AG04450 (cell line): ENCODE measurements at regions of chr17 and their contacts with region 1.

Region 1: DNA sequence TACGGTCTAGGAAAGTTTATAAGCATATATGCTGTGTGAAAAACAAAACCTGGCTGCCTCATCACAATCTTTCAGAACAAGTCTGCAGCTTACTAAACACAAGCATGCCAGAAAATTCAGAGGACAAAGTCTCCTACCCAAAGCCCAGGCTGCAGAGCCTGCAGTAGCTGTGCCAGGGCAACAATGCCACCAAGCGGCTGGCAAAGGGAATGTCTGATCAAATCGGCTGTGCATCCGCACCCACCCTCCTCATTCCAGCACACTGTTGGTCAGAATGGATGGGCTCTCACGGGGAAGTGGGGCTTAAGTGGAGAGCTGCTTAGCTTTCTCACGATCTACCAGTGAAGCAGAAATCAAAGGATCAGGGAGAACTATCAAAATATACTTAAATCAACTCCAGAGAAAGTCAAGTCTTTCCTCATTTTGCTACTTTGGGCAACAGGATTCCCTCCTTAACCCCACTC is 73.5 kb downstream of the CYTH1 start:
- DNase-seq: peak; percentile 72
- H3K4me3 ChIP-seq: no peak overlapping the region
- H3K27ac ChIP-seq: no peak overlapping the region
- H3K27me3 ChIP-seq: no peaks in the 10 kb centered on the region
- CTCF ChIP-seq: peak; percentile 95

Region 2: GRCh38 chr17:78421484-78422266 is 286.9 kb before region 1 on chr17:
- CTCF ChIA-PET with region 1: interaction called, 23 read pairs
- POLR2A ChIA-PET with region 1: no interaction called
- DNase-seq: peak; percentile 32
- H3K4me3 ChIP-seq: no peak overlapping the region
- H3K27ac ChIP-seq: no peak overlapping the region
- H3K27me3 ChIP-seq: no peaks in the 10 kb centered on the region
- CTCF ChIP-seq: peak; percentile 99

Region 3: DNA sequence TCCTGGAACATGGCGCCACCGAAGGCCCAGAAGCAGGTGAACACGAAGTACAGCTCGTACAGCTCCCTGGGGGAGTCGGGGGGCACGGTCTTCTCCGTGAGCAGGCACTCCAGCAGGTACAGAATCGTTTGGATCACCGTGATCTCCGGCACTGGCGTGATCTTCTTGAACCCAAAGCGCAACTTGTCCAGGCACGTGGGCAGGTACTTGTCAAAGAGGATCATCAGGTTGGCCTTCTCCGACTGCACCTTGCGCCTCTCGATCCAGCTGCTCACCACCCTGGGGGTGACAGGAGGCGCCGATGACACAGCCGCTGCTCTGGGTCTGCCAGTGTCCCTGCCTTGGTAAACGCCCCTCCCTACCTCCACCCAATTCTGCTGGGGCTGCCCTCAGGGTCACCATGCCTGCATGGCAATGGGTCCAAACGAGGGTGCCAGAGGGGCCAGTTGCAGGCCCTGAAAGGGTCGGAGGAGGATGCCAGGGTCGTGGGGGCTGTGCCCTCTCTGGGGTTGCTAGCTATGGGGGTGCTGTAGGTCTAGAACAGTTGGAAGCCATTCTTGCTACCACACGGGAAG is 222.2 kb before region 1 on chr17:
- CTCF ChIA-PET with region 1: interaction called, 14 read pairs
- POLR2A ChIA-PET with region 1: no interaction called
- DNase-seq: no peak
- H3K4me3 ChIP-seq: no peak overlapping the region
- H3K27ac ChIP-seq: no peak overlapping the region
- H3K27me3 ChIP-seq: peaks cover 31% of the 10 kb centered on the region
- CTCF ChIP-seq: no peak

Region 4: GRCh38 chr17:78497115-78497540 is 211.4 kb before region 1 on chr17:
- CTCF ChIA-PET with region 1: interaction called, 111 read pairs
- POLR2A ChIA-PET with region 1: interaction called, 5 read pairs
- DNase-seq: peak; percentile 38
- H3K4me3 ChIP-seq: no peak overlapping the region
- H3K27ac ChIP-seq: no peak overlapping the region
- H3K27me3 ChIP-seq: no peaks in the 10 kb centered on the region
- CTCF ChIP-seq: peak; percentile 80

Region 5: DNA sequence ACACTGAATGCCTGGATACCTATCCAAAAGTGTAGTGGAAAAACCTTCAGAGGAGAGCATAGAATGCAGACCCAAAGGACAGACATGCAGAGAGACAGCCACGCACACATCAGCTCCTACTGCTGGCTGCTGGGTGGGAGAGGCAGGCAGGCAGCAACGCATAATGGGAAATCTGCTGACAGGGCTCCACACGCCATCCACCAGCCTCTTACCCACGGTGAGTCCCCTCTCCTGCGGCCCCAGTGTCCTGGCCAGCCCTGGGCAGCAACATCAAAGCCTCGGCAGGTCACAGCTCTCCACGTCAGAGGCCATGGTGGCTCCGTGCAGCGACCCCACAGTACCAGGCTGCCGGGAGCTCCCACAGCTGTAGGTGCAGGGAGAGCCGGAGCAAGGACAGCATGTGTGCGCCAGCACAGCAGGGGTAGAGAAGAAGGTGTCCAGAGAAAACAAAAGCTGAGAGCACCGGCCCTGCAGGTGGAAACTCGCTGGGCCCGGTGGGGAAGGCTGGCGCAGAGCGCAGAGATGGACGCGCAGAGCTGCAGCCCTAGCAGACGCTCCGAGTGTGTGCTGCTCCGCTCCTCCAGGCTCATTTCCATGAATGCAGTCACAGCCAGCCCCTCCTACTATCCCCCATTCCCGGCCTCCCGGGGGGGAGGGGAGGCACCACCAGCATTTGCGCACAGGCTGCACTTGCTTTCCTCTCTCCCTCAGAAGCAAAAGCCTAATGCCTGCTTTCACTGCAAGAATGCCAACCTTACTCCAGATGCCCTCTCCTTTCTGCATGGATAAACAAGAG is 14.7 kb after region 1 on chr17:
- CTCF ChIA-PET with region 1: interaction called, 22 read pairs
- POLR2A ChIA-PET with region 1: interaction called, 3 read pairs
- DNase-seq: no peak
- H3K4me3 ChIP-seq: peak overlapping the region; percentile 37
- H3K27ac ChIP-seq: no peak overlapping the region
- H3K27me3 ChIP-seq: no peaks in the 10 kb centered on the region
- CTCF ChIP-seq: no peak

Region 6: DNA sequence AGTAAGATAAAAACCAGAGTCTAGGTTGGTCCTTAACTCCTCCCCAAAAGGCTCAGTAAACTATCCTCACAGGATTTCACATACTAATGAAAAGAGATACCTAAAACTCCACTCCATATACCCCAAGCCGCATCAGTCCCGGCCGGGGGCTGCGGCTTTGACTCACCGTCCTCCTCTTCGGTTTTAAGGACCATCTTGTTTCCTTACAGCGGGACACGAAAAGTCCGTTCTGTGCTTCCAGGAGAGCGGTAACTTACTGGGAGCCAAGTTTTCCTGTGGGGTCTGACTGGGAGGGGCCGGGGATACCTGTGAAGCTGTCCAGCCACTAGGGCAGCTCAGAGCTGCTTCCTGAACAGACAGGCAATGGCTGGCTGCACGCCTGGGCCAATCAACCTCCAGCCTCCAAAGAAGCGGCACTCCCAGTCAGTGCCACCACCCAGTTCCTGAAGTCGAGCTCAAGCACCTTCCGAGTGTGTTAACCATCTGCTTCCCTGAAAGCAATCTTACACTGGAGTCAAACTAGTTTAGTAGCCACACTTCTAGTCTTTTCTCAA is 28.1 kb after region 1 on chr17:
- CTCF ChIA-PET with region 1: interaction called, 14 read pairs
- POLR2A ChIA-PET with region 1: no interaction called
- DNase-seq: no peak
- H3K4me3 ChIP-seq: no peak overlapping the region
- H3K27ac ChIP-seq: no peak overlapping the region
- H3K27me3 ChIP-seq: no peaks in the 10 kb centered on the region
- CTCF ChIP-seq: no peak

Region 7: DNA sequence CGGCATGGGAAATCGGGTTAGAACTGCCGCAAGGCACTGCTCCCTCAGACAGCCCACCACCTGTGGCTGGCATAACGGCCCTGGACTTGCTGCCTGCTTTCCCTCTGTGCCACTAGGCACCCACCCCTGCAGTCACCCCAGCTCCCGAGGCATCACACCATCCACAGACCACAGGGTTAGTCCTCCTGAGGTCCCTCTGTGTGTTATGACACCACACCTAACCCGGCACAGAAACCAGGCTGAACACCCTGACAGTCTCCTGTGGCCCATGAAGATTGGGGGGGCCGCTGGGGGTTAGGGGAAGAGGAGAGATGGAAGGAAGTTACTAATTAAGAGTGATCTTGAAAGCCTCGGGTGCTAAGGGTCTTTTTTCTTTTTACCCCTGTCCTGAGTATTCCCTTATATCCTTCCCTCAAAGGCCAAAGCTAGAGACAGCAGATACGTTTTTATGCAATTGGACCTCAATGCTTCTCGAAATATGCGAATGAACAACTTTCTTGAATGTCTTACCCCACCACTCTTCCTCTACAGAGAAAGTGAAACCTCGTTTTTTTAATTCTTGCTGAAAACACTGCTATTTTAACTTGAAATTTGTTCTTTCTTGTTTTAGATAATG is 66.5 kb after region 1 on chr17:
- CTCF ChIA-PET with region 1: no interaction called
- POLR2A ChIA-PET with region 1: no interaction called
- DNase-seq: no peak
- H3K4me3 ChIP-seq: no peak overlapping the region
- H3K27ac ChIP-seq: no peak overlapping the region
- H3K27me3 ChIP-seq: no peaks in the 10 kb centered on the region
- CTCF ChIP-seq: no peak

Region 8: DNA sequence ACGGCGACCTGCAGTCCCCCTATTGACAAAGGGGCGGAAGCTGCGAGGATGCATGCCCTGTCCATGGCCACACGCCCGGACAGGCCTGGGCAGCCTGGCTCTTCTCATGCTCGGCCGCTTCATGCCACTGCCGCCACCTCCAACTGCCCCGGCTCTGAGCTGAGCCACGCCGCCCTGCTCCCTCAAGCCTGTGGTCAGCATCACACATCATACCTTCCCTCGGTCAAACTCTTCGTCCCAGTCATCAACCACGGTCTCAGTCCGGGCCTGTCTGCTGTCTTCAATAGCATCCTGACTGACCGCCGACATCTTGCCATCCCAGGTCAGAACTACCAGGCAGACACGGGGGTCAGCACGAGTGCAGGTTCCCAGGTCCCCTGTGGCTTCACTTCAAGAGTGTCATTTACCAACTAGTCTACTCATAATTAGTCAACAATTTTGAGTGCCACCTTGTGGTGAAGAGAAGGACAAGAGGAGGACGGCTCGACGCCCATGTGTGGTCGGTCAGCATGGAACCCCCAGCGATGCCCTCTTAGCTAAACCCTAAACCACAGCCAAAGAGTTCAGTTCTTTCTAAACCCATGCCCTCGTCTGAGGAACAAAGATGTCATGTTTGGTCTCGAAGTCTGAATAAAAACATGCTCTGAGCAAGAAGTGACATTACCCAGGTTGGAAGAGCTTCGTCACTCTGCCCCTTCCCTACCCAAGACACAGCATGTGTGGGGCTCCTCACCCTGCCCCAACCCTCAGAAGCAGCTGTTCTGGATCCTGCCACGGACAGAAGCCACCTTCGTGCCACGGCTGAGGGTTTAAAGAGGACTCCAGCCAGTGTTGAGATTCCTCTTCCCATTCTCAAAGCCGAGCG is 90.4 kb after region 1 on chr17:
- CTCF ChIA-PET with region 1: interaction called, 13 read pairs
- POLR2A ChIA-PET with region 1: no interaction called
- DNase-seq: no peak
- H3K4me3 ChIP-seq: no peak overlapping the region
- H3K27ac ChIP-seq: no peak overlapping the region
- H3K27me3 ChIP-seq: no peaks in the 10 kb centered on the region
- CTCF ChIP-seq: peak; percentile 32; the same call in 1 of the 2 replicates

Region 9: GRCh38 chr17:79045842-79046196 is 337.3 kb after region 1 on chr17:
- CTCF ChIA-PET with region 1: no interaction called
- POLR2A ChIA-PET with region 1: no interaction called
- DNase-seq: no peak
- H3K4me3 ChIP-seq: no peak overlapping the region
- H3K27ac ChIP-seq: no peak overlapping the region
- H3K27me3 ChIP-seq: no peaks in the 10 kb centered on the region
- CTCF ChIP-seq: peak; percentile 97